ENCODE measurements at regions of chr15 and their contacts with region 1.

Region 1: DNA sequence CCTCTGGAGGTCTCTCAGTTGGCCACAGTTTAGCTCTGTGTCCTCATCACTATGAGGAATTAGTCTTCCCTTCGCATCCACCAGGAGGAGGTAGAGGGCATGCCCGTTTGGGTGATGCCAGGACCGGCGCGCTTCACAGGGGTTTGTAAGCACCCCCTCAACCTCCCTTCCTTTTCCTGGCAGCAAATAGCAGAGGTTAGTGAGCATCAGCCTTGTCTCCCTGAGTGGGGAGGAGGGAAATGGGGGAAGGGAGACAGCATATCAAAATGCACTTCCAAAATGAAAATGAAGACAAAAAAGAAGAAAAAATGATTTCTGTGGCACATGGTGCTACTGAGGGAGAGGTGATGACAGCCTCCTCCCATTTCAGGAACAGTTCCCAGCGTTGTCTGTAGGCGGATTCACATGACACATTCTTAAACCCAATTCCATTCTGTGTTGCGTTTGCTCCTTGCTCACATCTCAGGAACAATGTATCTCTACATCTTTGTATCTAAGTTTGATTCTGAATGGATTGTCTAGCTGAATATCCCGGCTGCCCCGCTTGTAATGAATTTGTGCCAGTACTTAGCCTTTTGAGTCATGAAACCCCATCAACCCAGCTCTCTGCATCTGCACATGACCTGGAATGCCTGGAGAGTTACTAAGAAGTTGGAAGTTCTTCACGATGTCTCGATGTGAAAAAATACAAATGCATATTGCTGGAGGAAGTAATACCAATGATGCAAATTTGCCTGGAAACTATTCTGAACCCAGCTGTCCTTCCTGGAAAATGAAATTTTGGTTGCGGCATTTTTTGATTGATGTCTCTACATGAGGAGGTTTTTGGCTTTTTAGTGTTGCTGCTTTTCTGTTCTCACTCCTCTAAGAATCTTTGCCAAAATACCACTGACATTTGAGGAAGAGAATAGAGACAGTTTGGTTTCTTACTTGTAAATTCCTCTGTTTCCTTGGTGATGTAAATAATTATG is 45.2 kb downstream of the TYRO3 start:
- DNase-seq: peak; percentile 54 to 82
- H3K4me3 ChIP-seq: peak overlapping the region in 1 of 4 experiments; percentile 41; a peak in 2 of 8 replicates
- H3K27ac ChIP-seq: no peak overlapping the region
- H3K4me1 ChIP-seq: peaks cover 0 to 6% (median 3%) of the 10 kb centered on the region in 4 experiments; a peak in 2 of 7 replicates
- H3K27me3 ChIP-seq: no peaks in the 10 kb centered on the region
- CTCF ChIP-seq: peak; percentile 85 to 86 (median 86)
- EP300 ChIP-seq: no peak
- POLR2A ChIP-seq: no peak
- RAD21 ChIP-seq: peak; percentile 72 to 81

Region 2: DNA sequence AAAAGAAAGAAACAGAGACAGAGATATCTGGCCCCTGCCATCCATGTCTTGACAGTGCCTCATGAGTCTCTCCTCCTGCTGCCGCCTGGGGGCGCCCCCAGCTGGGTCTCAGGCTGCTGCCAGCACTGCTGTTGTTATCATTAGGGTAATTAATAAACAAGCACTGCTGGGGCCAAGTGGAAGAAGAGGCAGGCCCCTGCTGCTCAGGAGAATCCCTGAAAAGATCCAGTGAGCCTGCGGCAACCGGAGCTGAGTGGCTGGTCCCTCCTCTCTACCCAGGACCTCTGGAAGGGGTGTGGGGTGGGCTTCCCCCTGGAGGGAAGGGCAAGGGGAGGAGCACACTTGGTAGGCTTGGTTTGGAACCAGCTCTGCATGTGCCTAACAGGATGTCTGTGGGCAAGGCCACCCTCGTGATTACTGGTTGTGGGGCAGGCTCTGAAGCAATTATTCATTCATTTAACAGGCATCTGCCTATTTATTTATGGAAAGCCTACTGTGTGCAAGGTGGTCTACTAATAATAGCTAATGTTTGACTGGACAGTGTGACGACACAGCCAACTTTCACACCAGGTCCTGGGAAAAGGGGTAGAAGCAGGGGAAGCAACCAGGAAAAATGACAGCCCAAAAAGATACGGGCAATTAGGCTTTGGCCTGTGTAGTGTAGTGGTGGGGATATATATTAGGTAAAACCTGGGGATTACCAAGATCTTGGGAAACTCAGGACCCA is 46.4 kb before region 1 on chr15:
- CTCF ChIA-PET with region 1: interaction called, 23 read pairs
- POLR2A ChIA-PET with region 1: interaction called, 4 read pairs
- DNase-seq: peak; percentile 84 to 86
- H3K4me3 ChIP-seq: peak overlapping the region; percentile 46 to 96 (median 74); a peak in 7 of 8 replicates
- H3K27ac ChIP-seq: no peak overlapping the region
- H3K4me1 ChIP-seq: peaks cover 10 to 38% (median 31%) of the 10 kb centered on the region in 4 experiments
- H3K27me3 ChIP-seq: no peaks in the 10 kb centered on the region; a peak in 2 of 7 replicates
- CTCF ChIP-seq: peak; percentile 83 to 92 (median 84)
- EP300 ChIP-seq: peak in 1 of 2 experiments; percentile 43; a peak in 1 of 3 replicates
- POLR2A ChIP-seq: no peak
- RAD21 ChIP-seq: peak; percentile 86 to 93

Region 3: GRCh38 chr15:41585127-41586047 is 18.8 kb before region 1 on chr15:
- CTCF ChIA-PET with region 1: interaction called, 16 read pairs
- POLR2A ChIA-PET with region 1: interaction called, 11 read pairs
- DNase-seq: peak in 1 of 2 experiments; percentile 83
- H3K4me3 ChIP-seq: peak overlapping the region; percentile 11 to 62 (median 35)
- H3K27ac ChIP-seq: 0 out of 2 replicates have a peak overlapping the region, but pooled peaks have one; percentile 6
- H3K4me1 ChIP-seq: peaks cover 0 to 7% (median 3%) of the 10 kb centered on the region in 4 experiments; a peak in 4 of 7 replicates
- H3K27me3 ChIP-seq: no peaks in the 10 kb centered on the region
- CTCF ChIP-seq: peak in 2 of 3 experiments; percentile 8 to 25; a peak in 3 of 4 replicates
- EP300 ChIP-seq: no peak
- POLR2A ChIP-seq: no peak; a peak in 1 of 3 replicates
- RAD21 ChIP-seq: peak in 1 of 2 experiments; percentile 36; a peak in 2 of 4 replicates

Region 4: GRCh38 chr15:41621200-41622193 is 17.3 kb after region 1 on chr15:
- CTCF ChIA-PET with region 1: interaction called, 14 read pairs
- POLR2A ChIA-PET with region 1: interaction called, 7 read pairs
- DNase-seq: peak; percentile 60 to 85
- H3K4me3 ChIP-seq: peak overlapping the region; percentile 16 to 61 (median 39)
- H3K27ac ChIP-seq: no peak overlapping the region
- H3K4me1 ChIP-seq: peaks cover 0 to 7% (median 4%) of the 10 kb centered on the region in 4 experiments; a peak in 4 of 7 replicates
- H3K27me3 ChIP-seq: peaks cover 0 to 6% (median 3%) of the 10 kb centered on the region in 4 experiments; a peak in 4 of 7 replicates
- CTCF ChIP-seq: no peak
- EP300 ChIP-seq: 0 out of 3 replicates have a peak, but pooled peaks of 1 of the 2 experiments have one; percentile 29
- POLR2A ChIP-seq: peak; percentile 50 to 52; a peak in 1 of 3 replicates
- RAD21 ChIP-seq: no peak

Region 5: GRCh38 chr15:41660235-41661077 is 56.2 kb after region 1 on chr15 and contains the start of gene MGA:
- CTCF ChIA-PET with region 1: interaction called, 15 read pairs
- POLR2A ChIA-PET with region 1: interaction called, 3 read pairs
- DNase-seq: peak; percentile 89 to 95
- H3K4me3 ChIP-seq: peak within 1 kb of the TSS; percentile 65 to 84 (median 69)
- H3K27ac ChIP-seq: peak within 1 kb of the TSS; percentile 38; the same call in 1 of the 2 replicates
- H3K4me1 ChIP-seq: peaks cover 0 to 3% (median under 1%) of the 10 kb centered on the region in 4 experiments; a peak in 2 of 7 replicates
- H3K27me3 ChIP-seq: peaks cover 0 to 12% (median 6%) of the 10 kb centered on the region in 4 experiments; a peak in 4 of 7 replicates
- CTCF ChIP-seq: peak in 2 of 3 experiments; percentile 11 to 19; a peak in 2 of 4 replicates
- EP300 ChIP-seq: no peak
- POLR2A ChIP-seq: 0 out of 3 replicates have a peak, but pooled peaks of 1 of the 2 experiments have one; percentile 65
- RAD21 ChIP-seq: peak; percentile 15 to 18; a peak in 2 of 4 replicates
- total RNA-seq, gene MGA: 53.2 and 55.7 TPM in 2 replicates

Region 6: GRCh38 chr15:41703120-41703519 is 98.9 kb after region 1 on chr15:
- CTCF ChIA-PET with region 1: interaction called, 10 read pairs
- POLR2A ChIA-PET with region 1: no interaction called
- DNase-seq: no peak
- H3K4me3 ChIP-seq: no peak overlapping the region
- H3K27ac ChIP-seq: no peak overlapping the region
- H3K4me1 ChIP-seq: no peaks in the 10 kb centered on the region
- H3K27me3 ChIP-seq: no peaks in the 10 kb centered on the region
- CTCF ChIP-seq: no peak
- EP300 ChIP-seq: no peak
- POLR2A ChIP-seq: no peak
- RAD21 ChIP-seq: no peak

Region 7: DNA sequence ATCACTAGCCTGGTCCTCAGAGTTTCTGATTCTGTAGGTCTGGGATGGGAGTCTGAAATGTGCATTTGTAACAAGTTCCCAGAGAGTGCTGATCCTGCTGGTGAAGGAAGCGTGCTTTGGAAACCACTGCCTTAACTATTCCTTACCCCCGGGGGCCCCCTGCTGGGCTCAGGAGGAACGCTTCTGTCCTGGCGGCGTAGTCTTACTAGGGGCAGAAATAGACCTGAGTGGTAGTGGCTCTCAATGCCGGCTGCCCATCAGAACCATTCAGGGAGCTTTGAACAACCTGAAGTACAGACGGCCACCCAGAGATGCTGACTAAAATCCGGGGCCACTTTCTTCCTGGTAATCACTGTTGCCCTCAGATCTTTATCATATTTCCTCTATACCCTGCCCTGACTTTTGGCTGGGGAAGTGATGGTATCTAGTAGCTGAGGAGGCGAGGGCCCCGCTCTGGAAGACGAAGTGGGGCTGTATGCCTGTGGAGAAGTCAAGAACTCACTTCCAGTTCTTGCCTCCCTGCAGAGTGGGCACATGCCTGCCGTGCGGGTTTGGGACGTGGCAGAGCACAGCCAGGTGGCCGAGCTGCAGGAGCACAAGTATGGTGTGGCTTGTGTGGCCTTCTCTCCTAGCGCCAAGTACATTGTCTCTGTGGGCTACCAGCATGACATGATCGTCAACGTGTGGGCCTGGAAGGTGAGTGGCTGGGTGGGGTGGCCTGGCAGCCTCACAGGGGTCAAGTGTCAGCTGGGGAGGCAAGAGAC is 207.4 kb after region 1 on chr15:
- CTCF ChIA-PET with region 1: interaction called, 13 read pairs
- POLR2A ChIA-PET with region 1: interaction called, 4 read pairs
- DNase-seq: peak; percentile 65 to 91
- H3K4me3 ChIP-seq: no peak overlapping the region
- H3K27ac ChIP-seq: no peak overlapping the region
- H3K4me1 ChIP-seq: peaks cover 0 to 2% (median 0%) of the 10 kb centered on the region in 4 experiments; a peak in 2 of 7 replicates
- H3K27me3 ChIP-seq: no peaks in the 10 kb centered on the region
- CTCF ChIP-seq: peak; percentile 82 to 89 (median 83)
- EP300 ChIP-seq: no peak
- POLR2A ChIP-seq: no peak
- RAD21 ChIP-seq: peak; percentile 91 to 94

Measured in H1 (cell line).